ENCODE measurements at regions of chr22 and their contacts with region 1.

Region 1: GRCh38 chr22:19723983-19724827 is 866 bp downstream of the GP1BB start:
- DNase-seq: no peak
- H3K4me3 ChIP-seq: no peak overlapping the region
- H3K27ac ChIP-seq: no peak overlapping the region
- H3K4me1 ChIP-seq: peaks cover 0 to 12% (median 6%) of the 10 kb centered on the region in 4 donors
- H3K27me3 ChIP-seq: no peaks in the 10 kb centered on the region
- CTCF ChIP-seq: no peak

Region 2: GRCh38 chr22:19854778-19855503 is 130.7 kb after region 1 on chr22 and contains the starts of genes GNB1L and RTL10:
- intact Hi-C with region 1: loop called (anchors 10 kb)
- DNase-seq: peak; percentile 95 to 98
- H3K4me3 ChIP-seq: peak within 1 kb of the TSS; percentile 68 to 94
- H3K27ac ChIP-seq: peak within 1 kb of the TSS; percentile 86 to 94
- H3K4me1 ChIP-seq: peaks cover 0 to 54% (median 30%) of the 10 kb centered on the region in 4 donors
- H3K27me3 ChIP-seq: no peaks in the 10 kb centered on the region
- CTCF ChIP-seq: no peak

Measured in tibial artery (tissue), 4 donors.